Activated CD8-positive, alpha-beta T cell treated with anti-CD3 and anti-CD28 coated beads, Interleukin-2, amount 10 ng/mL, durations not matched to agents 7 days and 5 days (primary cell): ENCODE measurements at regions of chr10 and their contacts with region 1.

Region 1: GRCh38 chr10:7687228-7687907 is 15.7 kb upstream of the ITIH2 start:
- DNase-seq: peak; percentile 91
- ATAC-seq: peak; percentile 98
- H3K4me3 Mint-ChIP-seq: no peak overlapping the region
- H3K27ac Mint-ChIP-seq: no peak overlapping the region
- H3K4me1 Mint-ChIP-seq: peaks cover 5% of the 10 kb centered on the region
- H3K27me3 Mint-ChIP-seq: peaks cover 23% of the 10 kb centered on the region

Region 2: DNA sequence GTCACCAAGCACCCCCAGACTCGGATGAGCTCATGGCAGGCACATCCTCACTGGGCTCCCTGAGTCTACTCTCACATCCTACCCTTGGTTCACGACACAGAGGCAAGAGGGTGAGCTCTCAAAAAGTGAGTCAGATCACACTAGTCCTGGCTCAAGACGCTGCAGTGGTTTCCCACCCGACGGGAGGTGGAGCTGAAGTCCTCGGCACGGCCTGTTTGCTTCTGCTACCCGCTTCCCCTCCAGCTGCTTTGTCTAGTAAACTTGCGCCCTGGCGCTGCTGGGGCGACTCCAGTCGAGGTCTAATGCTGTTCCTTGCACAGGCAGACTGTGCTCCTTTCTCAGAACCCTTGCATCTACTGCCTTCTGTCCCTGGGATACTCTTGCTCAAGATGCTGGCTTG is 263.1 kb before region 1 on chr10:
- CTCF ChIA-PET with region 1: interaction called, 15 read pairs
- POLR2A ChIA-PET with region 1: no interaction called
- DNase-seq: peak; percentile 72
- ATAC-seq: peak; percentile 87
- H3K4me3 Mint-ChIP-seq: no peak overlapping the region
- H3K27ac Mint-ChIP-seq: peak overlapping the region; percentile 25
- H3K4me1 Mint-ChIP-seq: peaks cover 34% of the 10 kb centered on the region
- H3K27me3 Mint-ChIP-seq: peaks cover 4% of the 10 kb centered on the region

Region 3: DNA sequence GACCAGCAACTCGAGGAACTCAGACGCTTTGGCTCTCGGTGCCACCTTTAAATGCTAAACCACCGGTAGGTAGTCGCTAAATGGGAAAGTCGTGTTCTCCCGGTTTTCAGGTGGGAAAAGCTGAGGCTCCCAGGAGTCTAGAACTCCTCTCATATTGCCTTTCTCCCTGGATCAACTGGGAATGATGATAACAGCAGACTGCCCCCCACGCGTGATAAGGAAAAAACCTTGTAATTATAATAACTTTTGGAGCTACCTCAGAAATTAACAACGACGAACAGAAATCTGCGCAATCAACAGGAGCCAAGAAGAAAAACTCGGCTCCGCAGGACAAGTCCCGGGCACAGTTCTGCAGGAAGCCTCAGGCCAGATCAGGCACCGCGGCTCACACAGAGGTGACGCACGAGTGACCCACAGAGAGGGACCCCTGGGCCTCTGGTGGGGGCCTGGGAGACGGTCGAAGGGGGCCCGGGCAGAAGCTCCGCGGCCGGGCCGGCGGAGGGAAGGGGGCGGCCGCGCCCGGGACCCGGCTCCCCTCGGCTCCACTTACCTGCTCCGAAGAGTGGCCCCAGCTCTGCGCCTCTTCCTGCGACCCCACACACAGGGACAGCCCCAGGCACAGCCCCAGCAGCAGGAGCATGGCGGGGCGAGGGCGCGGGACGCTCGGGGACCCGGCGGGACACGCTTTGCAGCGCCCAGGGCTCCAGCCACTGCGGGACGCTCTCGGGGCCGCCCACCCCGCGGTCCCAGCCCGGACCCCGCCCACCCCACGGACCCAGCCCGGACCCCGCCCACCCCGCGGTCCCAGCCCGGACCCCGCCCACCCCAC is 20.9 kb before region 1 on chr10 and contains the start of gene ITIH5:
- CTCF ChIA-PET with region 1: interaction called, 15 read pairs
- POLR2A ChIA-PET with region 1: no interaction called
- DNase-seq: no peak
- ATAC-seq: peak; percentile 44
- H3K4me3 Mint-ChIP-seq: peak within 1 kb of the TSS; percentile 53
- H3K27ac Mint-ChIP-seq: no peak within 1 kb of the TSS
- H3K4me1 Mint-ChIP-seq: peaks cover 9% of the 10 kb centered on the region
- H3K27me3 Mint-ChIP-seq: peaks cover 53% of the 10 kb centered on the region
- total RNA-seq, gene ITIH5: not detected

Region 4: DNA sequence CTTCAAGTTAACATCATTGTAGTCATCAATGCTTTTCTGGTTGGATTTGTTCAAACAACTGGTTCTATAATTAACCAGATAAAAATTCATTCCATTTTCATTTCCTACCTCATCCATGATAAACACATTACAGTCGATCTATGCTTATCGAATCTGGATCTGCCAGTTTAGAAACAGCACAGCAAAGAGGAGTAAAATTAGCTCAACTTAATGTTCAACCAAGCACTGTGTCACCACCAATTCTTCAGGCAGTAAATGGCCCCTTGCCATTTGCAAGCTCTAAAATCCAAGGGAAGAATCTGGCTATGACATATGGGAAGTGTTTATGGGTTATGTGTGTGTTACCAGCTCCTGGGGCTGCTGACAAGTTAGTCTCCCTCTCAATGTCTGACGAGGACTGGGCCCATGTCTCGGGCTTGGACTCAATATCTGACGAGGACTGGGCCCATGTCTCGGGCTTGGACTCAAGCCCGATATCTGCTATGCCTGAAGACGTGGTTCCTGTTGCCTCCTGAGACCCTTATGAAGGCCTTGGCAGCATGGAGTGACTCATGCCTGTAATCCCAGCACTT is 10.0 kb after region 1 on chr10:
- CTCF ChIA-PET with region 1: interaction called, 16 read pairs
- POLR2A ChIA-PET with region 1: no interaction called
- DNase-seq: no peak
- ATAC-seq: no peak
- H3K4me3 Mint-ChIP-seq: no peak overlapping the region
- H3K27ac Mint-ChIP-seq: no peak overlapping the region
- H3K4me1 Mint-ChIP-seq: no peaks in the 10 kb centered on the region
- H3K27me3 Mint-ChIP-seq: peaks cover 14% of the 10 kb centered on the region